ENCODE measurements at regions of chr5 and their contacts with region 1.

Region 1: DNA sequence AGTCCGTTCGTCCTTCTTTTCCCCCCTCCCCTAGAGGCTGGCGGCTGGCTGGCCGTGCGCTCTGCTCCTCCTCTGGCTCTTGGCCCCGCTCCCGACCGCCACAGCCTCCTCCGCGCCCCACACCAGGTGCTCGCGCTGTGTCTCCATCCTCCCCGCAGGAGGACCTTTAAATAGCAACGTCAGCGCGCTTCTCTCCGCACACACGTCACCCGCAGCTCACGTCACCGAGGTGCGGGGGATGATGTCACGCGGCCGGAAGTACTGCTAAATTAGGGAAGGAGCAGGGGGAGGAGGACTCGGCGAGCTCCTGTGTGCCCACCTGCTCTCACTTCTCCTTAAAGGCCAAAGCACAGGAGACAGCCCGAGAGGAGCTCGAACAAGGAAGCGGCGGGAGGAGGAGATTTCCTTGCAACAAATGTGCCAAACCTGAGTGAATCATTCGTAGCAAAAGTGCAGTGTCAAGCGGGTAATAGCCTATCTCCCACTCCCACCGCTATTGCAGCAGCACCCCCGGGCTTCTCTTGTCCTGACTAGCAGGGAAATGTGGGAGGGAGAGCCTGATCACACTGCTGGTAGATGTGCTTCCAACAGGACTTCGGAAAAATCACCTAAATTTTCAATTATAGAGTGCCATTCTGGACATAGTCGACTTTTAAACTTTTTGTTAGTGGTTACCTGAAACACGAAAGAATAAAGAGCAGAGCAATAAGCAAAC is 614 bp upstream of the HOMER1 start:
- DNase-seq: peak; percentile 85
- ATAC-seq: peak; percentile 77
- H3K4me3 Mint-ChIP-seq: peak overlapping the region; percentile 91
- H3K27ac Mint-ChIP-seq: peak overlapping the region; percentile 89
- H3K4me1 Mint-ChIP-seq: peaks cover 28% of the 10 kb centered on the region
- H3K27me3 Mint-ChIP-seq: peaks cover 24% of the 10 kb centered on the region
- CTCF ChIP-seq: no peak

Region 2: DNA sequence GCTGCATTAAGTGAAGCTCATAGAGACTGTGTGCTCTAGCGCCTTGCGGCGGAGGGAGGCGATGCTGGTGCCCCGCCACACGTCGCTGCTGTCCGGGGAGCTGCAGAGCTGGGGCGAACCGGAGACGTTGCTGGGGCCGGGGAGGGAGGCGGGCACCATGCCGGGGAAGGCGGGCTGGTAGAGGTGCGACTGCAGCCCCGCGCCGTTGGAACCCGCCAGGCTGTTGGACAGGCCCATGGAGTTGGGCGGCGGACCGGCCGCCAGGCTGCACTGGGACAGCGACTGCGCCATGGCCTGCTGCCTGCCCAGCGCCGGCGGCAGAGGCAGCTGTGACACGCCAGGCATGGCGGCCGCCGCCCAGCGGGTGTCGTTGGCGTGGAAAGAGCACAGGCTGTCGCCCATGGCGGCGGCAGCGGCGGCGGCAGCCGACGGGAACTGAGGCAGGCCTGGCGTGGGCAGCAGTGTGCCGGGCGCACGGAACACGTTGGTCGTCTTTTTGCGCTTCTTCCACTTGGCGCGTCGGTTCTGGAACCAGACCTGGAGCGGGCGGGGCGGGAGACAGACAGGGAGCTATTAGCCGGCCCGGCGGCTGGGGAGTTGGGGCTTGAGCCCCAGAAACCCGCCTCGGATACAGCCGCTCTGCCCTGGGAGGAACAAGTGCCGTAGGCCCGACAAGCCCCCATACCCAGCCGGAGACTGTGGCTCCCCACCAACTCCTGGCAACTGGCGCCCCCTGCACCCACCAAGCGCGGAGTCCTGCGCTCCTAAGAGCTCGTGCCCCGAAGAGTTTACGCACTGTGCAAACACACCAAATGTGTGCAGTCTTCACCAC is 1884.1 kb before region 1 on chr5:
- CTCF ChIA-PET with region 1: no interaction called
- POLR2A ChIA-PET with region 1: interaction called, 4 read pairs
- intact Hi-C with region 1: loop called (anchors 5 kb)
- DNase-seq: peak; percentile 49
- ATAC-seq: peak; percentile 79
- H3K4me3 Mint-ChIP-seq: peak overlapping the region; percentile 82
- H3K27ac Mint-ChIP-seq: peak overlapping the region; percentile 56
- H3K4me1 Mint-ChIP-seq: peaks cover 28% of the 10 kb centered on the region
- H3K27me3 Mint-ChIP-seq: peaks cover 41% of the 10 kb centered on the region
- CTCF ChIP-seq: no peak

Region 3: GRCh38 chr5:78359831-78360673 is 1154.5 kb before region 1 on chr5 and contains the start of gene SCAMP1:
- CTCF ChIA-PET with region 1: no interaction called
- POLR2A ChIA-PET with region 1: no interaction called
- intact Hi-C with region 1: loop called (anchors 1 kb)
- DNase-seq: peak; percentile 99
- ATAC-seq: peak; percentile 87
- H3K4me3 Mint-ChIP-seq: peak within 1 kb of the TSS; percentile 95
- H3K27ac Mint-ChIP-seq: peak within 1 kb of the TSS; percentile 96
- H3K4me1 Mint-ChIP-seq: peaks cover 33% of the 10 kb centered on the region
- H3K27me3 Mint-ChIP-seq: no peaks in the 10 kb centered on the region
- CTCF ChIP-seq: no peak
- total RNA-seq, gene SCAMP1: 8.5 and 9.6 TPM in 2 replicates

Region 4: GRCh38 chr5:79235634-79236363 is 278.7 kb before region 1 on chr5 and contains the start of gene JMY:
- CTCF ChIA-PET with region 1: no interaction called
- POLR2A ChIA-PET with region 1: interaction called, 3 read pairs
- intact Hi-C with region 1: loop called (anchors 1 kb)
- DNase-seq: peak; percentile 68
- ATAC-seq: peak; percentile 79
- H3K4me3 Mint-ChIP-seq: peak within 1 kb of the TSS; percentile 91
- H3K27ac Mint-ChIP-seq: peak within 1 kb of the TSS; percentile 94
- H3K4me1 Mint-ChIP-seq: peaks cover 34% of the 10 kb centered on the region
- H3K27me3 Mint-ChIP-seq: no peaks in the 10 kb centered on the region
- CTCF ChIP-seq: no peak
- total RNA-seq, gene JMY: 6.4 and 6.9 TPM in 2 replicates

Region 5: DNA sequence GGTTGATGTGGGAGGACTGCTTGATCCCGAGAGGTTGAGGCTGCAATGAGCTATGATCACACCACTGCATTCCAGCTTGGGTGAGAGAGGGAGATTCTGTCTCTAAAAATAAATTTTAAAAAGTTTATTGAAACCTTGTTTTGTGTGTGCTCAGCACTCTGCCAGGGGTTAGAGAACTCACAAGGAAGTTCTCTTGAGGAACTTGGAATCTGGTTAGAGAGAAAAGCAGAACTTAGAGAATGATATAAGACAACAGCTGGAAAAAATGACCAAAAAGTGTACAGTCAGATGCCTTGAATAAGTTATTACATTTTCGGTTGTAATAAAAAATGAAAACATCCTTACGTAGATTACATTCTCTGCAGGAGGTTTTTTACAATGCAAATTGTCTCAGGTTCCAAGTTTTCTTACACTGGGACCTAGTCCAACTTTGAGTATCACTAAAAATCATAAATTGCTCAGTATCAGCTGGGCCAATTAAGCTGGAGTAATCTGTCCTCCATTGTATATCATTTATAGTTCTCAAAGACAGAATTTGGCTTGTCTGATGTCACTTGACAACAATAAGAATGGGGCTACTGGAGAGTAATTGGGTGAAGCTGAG is 76.0 kb after region 1 on chr5:
- CTCF ChIA-PET with region 1: no interaction called
- POLR2A ChIA-PET with region 1: no interaction called
- intact Hi-C with region 1: no loop called
- DNase-seq: no peak
- ATAC-seq: no peak
- H3K4me3 Mint-ChIP-seq: no peak overlapping the region
- H3K27ac Mint-ChIP-seq: no peak overlapping the region
- H3K4me1 Mint-ChIP-seq: no peaks in the 10 kb centered on the region
- H3K27me3 Mint-ChIP-seq: peaks cover 1% of the 10 kb centered on the region
- CTCF ChIP-seq: no peak

Region 6: GRCh38 chr5:79990598-79991507 is 476.3 kb after region 1 on chr5 and contains the start of gene MTX3:
- CTCF ChIA-PET with region 1: no interaction called
- POLR2A ChIA-PET with region 1: no interaction called
- intact Hi-C with region 1: loop called (anchors 2 kb)
- DNase-seq: peak; percentile 74
- ATAC-seq: peak; percentile 95
- H3K4me3 Mint-ChIP-seq: peak within 1 kb of the TSS; percentile 88
- H3K27ac Mint-ChIP-seq: peak within 1 kb of the TSS; percentile 84
- H3K4me1 Mint-ChIP-seq: peaks cover 23% of the 10 kb centered on the region
- H3K27me3 Mint-ChIP-seq: peaks cover 2% of the 10 kb centered on the region
- CTCF ChIP-seq: no peak
- total RNA-seq, gene MTX3: 20.0 and 21.4 TPM in 2 replicates